Activated CD4-positive, alpha-beta T cell treated with anti-CD3 and anti-CD28 coated beads, Interleukin-2, amount 10 ng/mL, durations not matched to agents 24 days and 14 days (primary cell): ENCODE measurements at regions of chr3 and their contacts with region 1.

Region 1: DNA sequence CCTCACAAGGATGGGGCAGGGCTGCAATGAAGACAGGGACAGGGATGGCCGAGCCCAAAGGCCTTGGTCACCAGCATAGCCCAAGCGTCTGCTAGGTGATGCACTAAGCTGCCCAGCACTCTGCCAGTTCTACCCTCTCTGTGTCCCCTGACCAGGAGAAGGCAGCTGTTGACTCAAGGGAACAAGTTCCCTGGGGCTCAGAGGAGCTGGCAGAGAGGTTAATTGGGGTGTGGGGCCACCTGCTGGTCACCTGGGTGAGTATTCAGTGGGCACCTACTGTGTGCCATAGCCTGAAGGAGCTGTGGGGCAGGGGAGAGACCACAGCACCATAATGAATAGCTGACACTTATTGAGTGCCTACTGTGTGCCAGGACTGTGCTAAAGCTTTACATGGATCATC is 22.0 kb upstream of the DOCK3 start:
- DNase-seq: peak; percentile 83
- H3K4me3 Mint-ChIP-seq: no peak overlapping the region
- H3K27ac Mint-ChIP-seq: peak overlapping the region; percentile 5
- H3K4me1 Mint-ChIP-seq: peaks cover 23% of the 10 kb centered on the region
- H3K27me3 Mint-ChIP-seq: no peaks in the 10 kb centered on the region

Region 2: GRCh38 chr3:50623840-50624474 is 28.8 kb before region 1 on chr3:
- intact Hi-C with region 1: loop called (anchors 1 kb)
- DNase-seq: peak; percentile 82
- H3K4me3 Mint-ChIP-seq: peak overlapping the region; percentile 83
- H3K27ac Mint-ChIP-seq: peak overlapping the region; percentile 85
- H3K4me1 Mint-ChIP-seq: peaks cover 87% of the 10 kb centered on the region
- H3K27me3 Mint-ChIP-seq: no peaks in the 10 kb centered on the region

Region 3: DNA sequence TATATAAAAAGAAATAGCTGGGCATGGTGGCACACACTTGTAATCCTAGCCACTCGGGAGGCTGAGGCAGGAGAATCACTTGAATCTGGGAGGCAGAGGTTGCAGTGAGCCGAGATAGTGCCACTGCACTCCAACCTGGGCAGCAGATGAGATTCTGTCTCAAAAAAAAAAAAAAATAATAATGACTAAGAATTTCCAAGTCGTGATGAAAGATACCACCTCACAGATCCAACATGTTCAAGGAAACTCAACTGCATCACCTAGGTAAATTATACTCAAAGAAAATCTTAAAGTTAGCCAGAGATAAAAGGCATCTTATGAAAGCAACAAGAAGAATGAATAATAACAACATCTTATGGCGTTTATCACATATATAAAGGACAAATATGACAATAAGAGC is 72.1 kb after region 1 on chr3:
- intact Hi-C with region 1: no loop called
- DNase-seq: no peak
- H3K4me3 Mint-ChIP-seq: no peak overlapping the region
- H3K27ac Mint-ChIP-seq: no peak overlapping the region
- H3K4me1 Mint-ChIP-seq: no peaks in the 10 kb centered on the region
- H3K27me3 Mint-ChIP-seq: peaks cover 5% of the 10 kb centered on the region